ENCODE measurements at regions of chr3 and their contacts with region 1.

Region 1: GRCh38 chr3:11335056-11335608 is 62.9 kb downstream of the ATG7 start:
- DNase-seq: peak; percentile 34 to 53 (median 51)
- H3K4me3 ChIP-seq: no peak overlapping the region
- H3K4me3 Mint-ChIP-seq: no peak overlapping the region
- H3K27ac ChIP-seq: no peak overlapping the region
- H3K27ac Mint-ChIP-seq: peak overlapping the region in 2 of 7 donors; percentile 30 to 39
- H3K4me1 ChIP-seq: no peaks in the 10 kb centered on the region
- H3K4me1 Mint-ChIP-seq: peaks cover 0 to 3% (median 2%) of the 10 kb centered on the region in 4 donors
- H3K27me3 ChIP-seq: no peaks in the 10 kb centered on the region
- H3K27me3 Mint-ChIP-seq: no peaks in the 10 kb centered on the region

Region 2: GRCh38 chr3:11236595-11237461 is 98.3 kb before region 1 on chr3:
- CTCF ChIA-PET with region 1: interaction called, 158 read pairs
- POLR2A ChIA-PET with region 1: no interaction called
- intact Hi-C with region 1: no loop called
- DNase-seq: peak; percentile 67 to 72 (median 70)
- H3K4me3 ChIP-seq: no peak overlapping the region
- H3K4me3 Mint-ChIP-seq: no peak overlapping the region
- H3K27ac ChIP-seq: no peak overlapping the region
- H3K27ac Mint-ChIP-seq: no peak overlapping the region
- H3K4me1 ChIP-seq: no peaks in the 10 kb centered on the region
- H3K4me1 Mint-ChIP-seq: peaks cover 0 to 2% (median 0%) of the 10 kb centered on the region in 4 donors
- H3K27me3 ChIP-seq: no peaks in the 10 kb centered on the region
- H3K27me3 Mint-ChIP-seq: peaks cover 4 to 8% of the 10 kb centered on the region in 2 donors

Region 3: DNA sequence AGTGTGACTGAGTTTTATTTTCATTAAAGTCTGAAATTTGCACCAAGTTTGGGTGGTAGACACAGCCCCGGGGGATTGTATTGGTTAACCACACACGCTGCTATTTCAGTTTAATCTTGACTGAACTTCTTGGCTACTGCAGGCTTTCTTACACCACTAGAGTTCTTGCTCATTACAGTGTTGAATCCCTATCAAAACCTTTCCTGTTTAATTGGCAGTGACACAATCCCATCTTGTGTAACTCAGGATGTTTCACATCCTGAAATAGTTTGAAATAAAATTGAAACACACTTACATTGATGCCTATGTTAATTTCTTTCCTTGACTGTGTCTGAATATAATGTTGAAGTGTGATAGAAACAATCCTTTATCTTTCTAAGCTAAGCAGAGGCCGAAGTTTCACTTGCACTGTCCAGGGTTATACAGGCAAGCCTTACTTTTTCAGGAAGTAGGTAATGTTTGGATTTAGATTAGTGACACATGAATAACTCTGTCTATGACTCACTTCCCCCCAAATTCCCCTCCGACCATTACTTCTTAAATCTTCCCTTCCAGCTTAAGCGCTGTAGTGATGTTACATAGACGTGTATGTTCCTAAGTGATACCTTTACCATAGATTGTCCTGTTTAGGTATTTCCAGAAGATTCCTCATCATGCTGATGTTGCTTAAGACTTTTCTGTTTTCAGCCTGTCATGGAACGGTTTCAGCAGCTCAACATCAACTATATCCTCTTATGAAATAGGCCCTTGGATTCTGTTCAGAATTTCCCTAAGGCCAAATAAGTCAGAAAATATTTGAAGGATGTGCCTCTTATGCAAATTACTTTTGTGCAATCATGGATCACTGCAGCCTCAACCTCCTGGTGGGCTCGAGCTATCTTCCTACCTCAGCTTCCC is 46.1 kb before region 1 on chr3:
- CTCF ChIA-PET with region 1: interaction called, 12 read pairs
- POLR2A ChIA-PET with region 1: no interaction called
- intact Hi-C with region 1: no loop called
- DNase-seq: no peak
- H3K4me3 ChIP-seq: no peak overlapping the region
- H3K4me3 Mint-ChIP-seq: peak overlapping the region in 5 of 8 donors; percentile 6 to 45 (median 25)
- H3K27ac ChIP-seq: peak overlapping the region; percentile 11
- H3K27ac Mint-ChIP-seq: peak overlapping the region; percentile 54 to 98 (median 85)
- H3K4me1 ChIP-seq: peaks cover 47% of the 10 kb centered on the region
- H3K4me1 Mint-ChIP-seq: peaks cover 39 to 65% (median 51%) of the 10 kb centered on the region in 4 donors
- H3K27me3 ChIP-seq: no peaks in the 10 kb centered on the region
- H3K27me3 Mint-ChIP-seq: no peaks in the 10 kb centered on the region